Activated naive CD8-positive, alpha-beta T cell treated with anti-CD3 and anti-CD28 coated beads, Interleukin-2, amount 10 ng/mL, durations not matched to agents 7 days and 5 days (primary cell): ENCODE measurements at regions of chr4 and their contacts with region 1.

Region 1: DNA sequence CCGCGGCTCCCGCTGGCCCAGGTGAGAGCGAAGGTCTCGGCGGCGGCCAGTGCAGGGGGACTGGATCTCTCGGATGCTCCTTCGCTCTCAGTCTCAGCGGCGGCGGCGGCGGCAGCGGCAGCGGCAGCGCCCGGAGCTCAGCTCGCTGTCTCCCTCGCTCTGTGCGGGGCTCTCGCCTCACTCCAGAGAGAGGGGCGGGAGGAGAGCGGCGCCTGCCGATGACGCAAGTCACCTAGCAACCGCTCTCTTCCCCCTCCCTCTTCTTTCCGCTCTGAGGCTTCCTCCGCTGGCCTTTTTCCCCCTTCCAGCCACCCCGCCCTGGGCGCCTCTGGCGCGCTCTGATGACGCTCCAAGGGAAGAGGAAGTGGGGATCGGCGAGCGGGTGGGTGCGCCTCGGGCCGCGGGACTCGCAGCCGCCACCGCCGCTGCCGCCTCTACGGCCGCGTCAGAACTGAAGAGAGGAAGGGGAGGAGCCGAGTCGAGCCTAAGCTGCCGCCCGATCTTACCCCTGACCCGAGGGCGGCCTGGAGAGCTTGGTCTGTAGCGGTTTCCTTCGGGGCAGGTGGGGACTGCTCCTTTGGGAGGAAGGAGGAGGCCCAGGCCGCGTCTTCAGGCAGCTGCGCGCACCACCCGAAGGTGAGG is at the start of gene FBXW7:
- DNase-seq: peak; percentile 100
- ATAC-seq: peak; percentile 86
- H3K4me3 Mint-ChIP-seq: peak within 1 kb of the TSS; percentile 92
- H3K27ac Mint-ChIP-seq: peak within 1 kb of the TSS; percentile 98
- H3K4me1 Mint-ChIP-seq: peaks cover 39% of the 10 kb centered on the region
- H3K27me3 Mint-ChIP-seq: no peaks in the 10 kb centered on the region
- total RNA-seq, gene FBXW7: 80.2 to 91.2 TPM

Region 2: DNA sequence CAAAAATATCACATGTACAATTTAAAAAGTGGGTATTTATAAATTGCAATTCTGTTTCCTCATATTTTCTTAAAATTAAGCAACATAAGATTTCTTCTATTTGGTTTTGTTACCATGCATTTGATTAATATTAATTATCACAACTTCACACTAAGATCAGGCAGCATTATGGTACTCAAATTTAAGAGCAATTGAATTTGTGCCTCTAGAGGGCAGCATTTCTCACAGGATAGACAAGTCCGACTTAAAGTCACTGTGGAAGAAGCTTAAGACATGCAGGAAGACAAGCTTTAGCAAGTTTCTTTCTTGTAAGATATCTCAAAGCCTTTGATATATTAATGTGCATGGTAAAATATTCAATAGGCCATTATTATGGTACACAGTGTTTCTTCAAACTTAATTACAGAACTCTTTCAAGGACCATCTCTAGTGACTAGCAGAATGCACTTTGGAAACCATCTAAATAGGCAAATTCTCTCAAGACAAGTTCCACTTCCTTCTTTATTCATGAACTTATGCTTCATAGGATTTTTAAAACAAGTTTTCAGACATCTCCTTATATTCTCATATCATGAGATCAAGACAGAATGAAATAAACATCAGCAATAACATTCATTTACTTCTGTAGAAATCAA is 35.1 kb before region 1 on chr4:
- POLR2A ChIA-PET with region 1: interaction called, 13 read pairs
- DNase-seq: no peak
- ATAC-seq: peak; percentile 65
- H3K4me3 Mint-ChIP-seq: no peak overlapping the region
- H3K27ac Mint-ChIP-seq: no peak overlapping the region
- H3K4me1 Mint-ChIP-seq: peaks cover 25% of the 10 kb centered on the region
- H3K27me3 Mint-ChIP-seq: no peaks in the 10 kb centered on the region

Region 3: DNA sequence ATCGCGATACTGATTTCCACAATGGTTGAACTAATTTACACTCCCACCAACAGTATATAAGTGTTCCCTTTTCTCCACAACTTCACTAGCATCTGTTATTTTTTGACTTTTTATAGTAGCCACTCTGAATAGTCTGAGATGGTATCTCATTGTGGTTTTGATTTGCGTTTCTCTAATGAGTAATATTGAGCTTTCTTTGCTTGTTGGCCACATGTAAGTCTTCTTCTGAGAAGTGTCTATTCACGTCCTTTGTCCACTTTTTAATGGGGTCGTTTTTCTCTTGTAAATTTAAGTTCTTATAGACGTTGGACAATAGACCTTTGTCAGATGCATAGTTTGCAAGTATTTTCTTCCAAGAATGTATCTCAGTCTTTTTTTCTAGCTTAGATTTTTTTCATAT is 10.2 kb before region 1 on chr4:
- POLR2A ChIA-PET with region 1: interaction called, 25 read pairs
- DNase-seq: no peak
- ATAC-seq: no peak
- H3K4me3 Mint-ChIP-seq: no peak overlapping the region
- H3K27ac Mint-ChIP-seq: no peak overlapping the region
- H3K4me1 Mint-ChIP-seq: peaks cover 24% of the 10 kb centered on the region
- H3K27me3 Mint-ChIP-seq: no peaks in the 10 kb centered on the region

Region 4: DNA sequence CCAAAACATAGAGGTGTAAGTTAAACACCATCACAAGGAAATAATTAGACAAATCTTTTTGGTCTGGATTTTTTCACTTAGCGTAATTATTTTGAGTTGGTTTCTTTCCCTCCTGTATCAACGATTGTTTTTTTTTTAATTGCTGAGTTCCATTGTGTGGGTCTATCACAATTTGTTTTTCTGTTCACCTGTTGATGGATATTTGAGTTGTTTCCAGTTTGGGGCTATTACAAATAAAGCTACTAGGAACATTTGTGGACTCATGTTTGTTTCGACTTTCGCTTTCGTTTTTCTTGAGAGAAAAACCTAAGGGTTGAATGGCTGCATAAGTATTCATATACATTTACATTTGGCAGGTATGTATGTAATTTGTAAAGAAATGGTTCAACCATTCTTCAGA is 20.3 kb after region 1 on chr4:
- POLR2A ChIA-PET with region 1: interaction called, 157 read pairs
- DNase-seq: no peak
- ATAC-seq: no peak
- H3K4me3 Mint-ChIP-seq: peak overlapping the region; percentile 72
- H3K27ac Mint-ChIP-seq: peak overlapping the region; percentile 76
- H3K4me1 Mint-ChIP-seq: peaks cover 31% of the 10 kb centered on the region
- H3K27me3 Mint-ChIP-seq: peaks cover 3% of the 10 kb centered on the region

Region 5: DNA sequence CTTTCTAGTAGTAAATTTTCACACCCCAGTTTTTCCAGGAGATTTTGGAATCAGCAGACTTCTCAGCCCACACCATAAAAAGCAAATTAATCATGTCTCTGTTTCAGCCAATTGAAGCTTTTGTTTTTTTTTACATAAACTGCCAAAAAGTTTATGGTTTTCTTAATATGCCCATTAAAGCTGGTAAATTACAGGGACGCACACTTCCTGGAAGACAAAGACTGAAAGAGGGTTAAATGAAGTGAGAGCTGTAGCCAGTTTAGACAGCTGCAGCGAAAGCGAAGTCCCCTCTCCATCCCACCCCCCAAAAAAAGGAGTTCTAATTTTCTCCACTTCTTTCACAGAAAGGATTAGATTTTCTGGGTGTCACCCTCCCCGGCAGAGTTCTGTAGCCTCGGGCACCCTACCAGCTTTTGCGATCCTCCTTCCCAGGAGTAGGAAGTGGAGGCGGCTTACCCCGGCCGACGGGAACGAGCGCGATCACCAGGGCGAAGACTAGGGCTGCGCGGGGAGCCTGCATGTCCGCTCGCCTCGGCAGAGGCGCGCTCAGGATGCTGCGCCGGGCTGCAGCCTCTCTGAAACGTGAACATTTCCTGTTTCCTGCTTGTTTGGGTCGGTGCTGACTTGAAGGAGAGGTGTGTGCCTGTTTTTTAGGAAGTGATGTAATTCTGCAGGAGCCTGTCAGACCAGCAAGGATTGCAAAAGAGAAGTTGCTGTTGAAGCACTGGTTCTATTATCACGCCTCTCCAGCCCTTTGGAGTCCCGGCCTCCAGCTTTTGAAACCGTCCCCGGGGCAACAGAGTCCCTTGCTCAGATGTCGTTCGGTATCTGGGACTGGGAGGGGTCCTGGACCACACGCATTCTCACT is 143.6 kb after region 1 on chr4 and contains the start of gene TMEM154:
- POLR2A ChIA-PET with region 1: interaction called, 11 read pairs
- DNase-seq: peak; percentile 77
- ATAC-seq: peak; percentile 100
- H3K4me3 Mint-ChIP-seq: peak within 1 kb of the TSS; percentile 95
- H3K27ac Mint-ChIP-seq: peak within 1 kb of the TSS; percentile 96
- H3K4me1 Mint-ChIP-seq: peaks cover 34% of the 10 kb centered on the region
- H3K27me3 Mint-ChIP-seq: no peaks in the 10 kb centered on the region
- total RNA-seq, gene TMEM154: 21.9 to 24.7 TPM